Calu3 (cell line): ENCODE measurements at regions of chr7 and their contacts with region 1.

Region 1: GRCh38 chr7:39353615-39354376 is 212.4 kb upstream of the YAE1 start:
- DNase-seq: peak; percentile 77
- H3K4me3 Mint-ChIP-seq: peak overlapping the region; percentile 44
- H3K27ac Mint-ChIP-seq: peak overlapping the region; percentile 78
- H3K4me1 Mint-ChIP-seq: peaks cover 26% of the 10 kb centered on the region
- H3K27me3 Mint-ChIP-seq: no peaks in the 10 kb centered on the region
- CTCF ChIP-seq: peak; percentile 70

Region 2: DNA sequence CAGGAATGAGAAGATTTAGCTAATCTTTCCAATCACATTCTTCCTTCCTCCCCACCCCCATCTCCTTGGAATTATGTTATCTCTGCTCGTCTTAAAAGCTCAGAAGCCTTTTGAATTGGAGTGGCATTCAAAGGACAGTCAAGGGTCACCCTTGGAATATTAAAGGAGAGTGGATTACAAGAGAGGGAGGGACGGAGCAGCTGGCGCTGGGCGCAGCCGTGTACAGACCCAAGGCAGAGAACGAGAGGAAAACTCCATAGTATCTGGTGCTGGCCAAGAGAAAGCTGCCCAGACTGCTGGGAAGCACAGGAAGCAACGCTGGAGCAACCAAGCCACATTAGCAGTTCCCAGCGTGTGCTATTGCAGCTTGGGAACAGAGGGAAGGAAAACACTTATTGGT is 280.4 kb before region 1 on chr7:
- CTCF ChIA-PET with region 1: no interaction called
- intact Hi-C with region 1: loop called (anchors 10 kb)
- DNase-seq: no peak
- H3K4me3 Mint-ChIP-seq: no peak overlapping the region
- H3K27ac Mint-ChIP-seq: no peak overlapping the region
- H3K4me1 Mint-ChIP-seq: no peaks in the 10 kb centered on the region
- H3K27me3 Mint-ChIP-seq: no peaks in the 10 kb centered on the region
- CTCF ChIP-seq: no peak

Region 3: DNA sequence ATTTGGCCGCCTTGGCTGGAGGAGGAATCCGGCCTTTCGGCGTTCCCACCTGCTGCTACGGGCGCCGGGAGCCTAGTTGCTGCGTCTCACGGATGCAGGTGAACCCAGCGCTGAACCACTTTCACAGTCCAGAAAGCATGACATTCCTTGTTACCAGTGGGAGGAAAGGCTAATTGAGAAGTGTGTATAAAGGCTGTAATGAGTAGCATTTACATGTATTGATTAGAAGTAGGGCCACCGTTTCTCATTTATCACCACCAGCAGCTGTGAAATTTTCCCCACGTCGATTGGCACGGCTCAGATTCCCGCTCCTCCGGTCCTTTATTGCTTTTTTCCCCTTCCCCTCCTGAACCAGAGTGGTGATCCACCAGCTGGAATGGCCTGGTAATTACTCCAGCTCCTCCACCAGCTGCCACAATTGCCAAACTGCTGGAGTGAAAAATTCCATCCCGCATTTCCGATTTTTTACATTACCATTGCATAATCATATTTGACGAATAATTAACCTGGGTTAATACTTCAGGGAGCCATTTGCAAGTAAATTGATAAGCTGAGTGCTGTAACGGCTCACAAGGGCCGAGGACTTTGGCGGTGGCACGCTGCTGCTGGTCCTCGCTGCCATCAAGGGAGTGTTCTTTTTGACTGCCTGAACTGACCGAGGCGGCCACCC is 222.8 kb before region 1 on chr7:
- CTCF ChIA-PET with region 1: no interaction called
- intact Hi-C with region 1: loop called (anchors 10 kb)
- DNase-seq: peak; percentile 42
- H3K4me3 Mint-ChIP-seq: peak overlapping the region; percentile 85
- H3K27ac Mint-ChIP-seq: peak overlapping the region; percentile 88
- H3K4me1 Mint-ChIP-seq: peaks cover 10% of the 10 kb centered on the region
- H3K27me3 Mint-ChIP-seq: no peaks in the 10 kb centered on the region
- CTCF ChIP-seq: no peak

Region 4: GRCh38 chr7:39383136-39383535 is 29.3 kb after region 1 on chr7:
- CTCF ChIA-PET with region 1: no interaction called
- intact Hi-C with region 1: no loop called
- DNase-seq: no peak
- H3K4me3 Mint-ChIP-seq: no peak overlapping the region
- H3K27ac Mint-ChIP-seq: no peak overlapping the region
- H3K4me1 Mint-ChIP-seq: peaks cover 11% of the 10 kb centered on the region
- H3K27me3 Mint-ChIP-seq: peaks cover 45% of the 10 kb centered on the region
- CTCF ChIP-seq: no peak

Region 5: DNA sequence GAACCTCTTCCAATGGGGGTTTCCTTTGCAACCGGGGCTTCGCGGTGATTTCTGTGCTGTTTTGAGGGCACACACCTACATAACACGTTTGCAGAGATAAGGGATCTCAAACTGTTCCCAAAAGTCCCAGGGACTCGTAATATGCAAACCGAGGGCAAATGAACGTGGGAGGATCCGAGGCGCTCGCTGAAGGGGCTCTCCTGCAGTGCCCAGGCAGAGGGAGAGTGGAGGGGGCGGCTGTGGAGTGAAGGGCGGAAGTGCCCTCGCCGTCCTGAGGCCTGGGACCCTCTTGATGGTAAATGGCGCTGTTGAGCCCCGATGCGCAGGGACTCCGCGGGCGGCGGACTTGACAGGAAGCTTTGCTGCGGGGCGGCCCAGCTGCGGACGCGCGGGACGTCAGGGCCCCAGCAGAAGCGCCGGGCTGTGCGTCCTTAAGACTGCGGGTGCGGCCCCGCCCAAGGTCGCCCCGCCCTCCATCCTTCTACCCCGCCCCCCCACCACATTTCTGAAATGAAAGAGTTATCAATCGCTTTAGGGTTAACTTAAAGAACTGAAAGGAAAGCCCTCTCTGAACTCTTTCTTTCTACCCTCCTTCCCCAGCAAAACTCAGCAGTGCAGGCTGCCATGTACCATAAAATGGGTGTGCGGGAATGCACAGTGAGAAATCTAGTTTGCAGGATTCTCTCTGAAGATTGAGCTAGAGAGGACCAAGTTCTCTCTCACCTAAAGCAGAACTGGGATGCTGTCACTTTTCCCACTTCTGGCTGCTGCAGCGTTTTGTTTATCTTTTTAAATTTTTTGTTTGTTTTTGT is 60.6 kb after region 1 on chr7:
- CTCF ChIA-PET with region 1: interaction called, 4 read pairs
- intact Hi-C with region 1: loop called (anchors 5 kb)
- DNase-seq: peak; percentile 68
- H3K4me3 Mint-ChIP-seq: peak overlapping the region; percentile 97
- H3K27ac Mint-ChIP-seq: peak overlapping the region; percentile 25
- H3K4me1 Mint-ChIP-seq: no peaks in the 10 kb centered on the region
- H3K27me3 Mint-ChIP-seq: no peaks in the 10 kb centered on the region
- CTCF ChIP-seq: no peak